Right ventricle myocardium inferior (tissue), 1 donor: ENCODE measurements at regions of chr4 and their contacts with region 1.

Region 1: GRCh38 chr4:2262143-2262943 is 434 bp upstream of the MXD4 start:
- DNase-seq: peak; percentile 100
- ATAC-seq: peak; percentile 96

Region 2: DNA sequence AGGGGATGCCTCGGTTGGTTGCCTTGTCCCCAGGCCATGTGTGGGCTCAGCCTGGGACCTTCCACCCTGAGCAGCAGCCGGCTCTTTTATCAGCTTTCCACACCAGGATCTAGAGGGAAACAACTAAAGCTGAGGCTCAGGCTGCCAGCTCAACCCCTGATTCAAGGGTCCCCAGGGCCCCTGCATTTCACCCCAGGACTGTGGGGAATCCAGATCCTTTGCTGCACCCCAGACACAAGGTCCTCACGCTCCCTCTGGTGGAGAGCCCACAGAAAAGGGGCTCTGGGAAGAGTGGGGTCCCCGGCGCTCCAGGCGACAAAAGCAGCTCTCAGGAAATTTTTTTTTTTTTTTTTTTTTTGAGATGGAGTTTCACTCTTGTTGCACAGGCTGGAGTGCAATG is 91.8 kb after region 1 on chr4:
- intact Hi-C with region 1: loop called (anchors 5 kb)
- DNase-seq: peak; percentile 57
- ATAC-seq: no peak

Region 3: GRCh38 chr4:2468445-2469192 is 206.3 kb after region 1 on chr4 and contains the start of gene RNF4:
- intact Hi-C with region 1: loop called (anchors 10 kb)
- DNase-seq: peak; percentile 98
- ATAC-seq: peak; percentile 96
- total RNA-seq, gene RNF4: 27.2 TPM

Region 4: DNA sequence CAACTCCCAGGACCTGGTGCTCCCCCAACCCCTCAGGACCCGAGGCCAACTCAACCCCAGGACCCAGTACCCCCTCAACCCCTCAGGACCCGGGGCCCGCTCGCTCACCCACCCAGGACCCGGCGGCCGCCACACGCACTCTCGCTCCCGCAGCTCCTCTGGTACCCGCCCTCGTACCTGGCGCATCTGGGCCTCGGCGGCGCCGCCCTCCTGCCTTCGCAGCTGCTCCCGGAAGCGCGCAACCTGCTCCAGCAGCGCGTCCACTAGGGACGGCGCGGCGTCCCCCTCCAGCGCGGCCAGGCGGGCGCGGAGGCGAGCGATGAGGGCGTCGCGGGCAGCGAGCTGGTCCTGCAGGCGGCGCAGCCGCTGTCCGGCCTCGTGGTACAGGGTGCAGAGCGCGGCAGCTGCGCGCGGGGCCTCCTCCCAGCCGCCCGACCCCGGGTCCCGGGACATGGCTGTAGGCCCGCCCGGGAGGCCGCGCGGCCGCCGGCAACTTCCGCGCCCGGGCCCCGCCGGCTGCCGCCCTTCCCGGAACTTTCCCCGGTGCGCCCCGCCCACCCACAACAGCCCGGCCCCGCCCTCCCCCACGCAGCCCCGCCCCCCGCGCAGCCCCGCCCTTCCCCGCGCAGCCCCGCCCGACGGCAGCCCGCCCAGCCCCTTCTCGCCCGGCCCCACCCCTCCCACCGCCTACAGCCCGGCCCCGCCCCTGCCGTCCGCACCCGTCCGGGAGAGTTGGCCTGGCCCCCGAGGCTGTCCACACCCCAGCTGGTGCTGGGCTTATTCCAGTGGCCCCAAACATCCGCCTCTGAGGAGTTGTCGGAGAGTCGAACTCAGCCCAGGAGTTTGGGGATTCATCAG is 493.7 kb after region 1 on chr4 and contains the start of gene TNIP2:
- intact Hi-C with region 1: loop called (anchors 5 kb)
- DNase-seq: peak; percentile 94
- ATAC-seq: peak; percentile 89
- total RNA-seq, gene TNIP2: 29.6 TPM